ENCODE measurements at regions of chr2 and their contacts with region 1.

Region 1: GRCh38 chr2:48107326-48107925 is 201.1 kb upstream of the FBXO11 start:
- DNase-seq: no peak
- H3K4me3 ChIP-seq: peak overlapping the region in 1 of 3 donors; percentile 48
- H3K27ac ChIP-seq: no peak overlapping the region
- H3K4me1 ChIP-seq: peaks cover 0 to 12% (median 7%) of the 10 kb centered on the region in 3 donors
- H3K27me3 ChIP-seq: no peaks in the 10 kb centered on the region
- CTCF ChIP-seq: no peak

Region 2: DNA sequence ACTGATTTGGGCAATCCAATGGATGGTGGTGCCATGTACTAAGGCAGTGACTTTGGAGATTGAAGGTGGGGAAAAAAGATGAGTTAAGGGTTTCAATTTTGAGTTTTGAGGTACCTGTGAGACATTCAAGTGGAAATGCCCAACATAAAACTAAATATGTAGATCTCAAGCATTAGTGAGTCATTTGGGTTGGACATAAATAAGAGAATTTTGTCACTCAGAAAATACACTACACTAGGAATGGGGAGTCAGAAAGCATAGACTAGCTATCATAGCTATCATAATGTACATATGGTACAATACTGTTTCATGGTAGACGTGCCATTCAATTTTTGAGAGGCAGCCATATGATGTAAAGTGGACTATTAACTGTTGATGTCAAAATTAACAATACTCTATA is 257.2 kb before region 1 on chr2:
- intact Hi-C with region 1: loop called (anchors 10 kb)
- DNase-seq: no peak
- H3K4me3 ChIP-seq: no peak overlapping the region
- H3K27ac ChIP-seq: no peak overlapping the region
- H3K4me1 ChIP-seq: peaks cover 0 to 4% (median 0%) of the 10 kb centered on the region in 3 donors
- H3K27me3 ChIP-seq: no peaks in the 10 kb centered on the region
- CTCF ChIP-seq: no peak

Region 3: DNA sequence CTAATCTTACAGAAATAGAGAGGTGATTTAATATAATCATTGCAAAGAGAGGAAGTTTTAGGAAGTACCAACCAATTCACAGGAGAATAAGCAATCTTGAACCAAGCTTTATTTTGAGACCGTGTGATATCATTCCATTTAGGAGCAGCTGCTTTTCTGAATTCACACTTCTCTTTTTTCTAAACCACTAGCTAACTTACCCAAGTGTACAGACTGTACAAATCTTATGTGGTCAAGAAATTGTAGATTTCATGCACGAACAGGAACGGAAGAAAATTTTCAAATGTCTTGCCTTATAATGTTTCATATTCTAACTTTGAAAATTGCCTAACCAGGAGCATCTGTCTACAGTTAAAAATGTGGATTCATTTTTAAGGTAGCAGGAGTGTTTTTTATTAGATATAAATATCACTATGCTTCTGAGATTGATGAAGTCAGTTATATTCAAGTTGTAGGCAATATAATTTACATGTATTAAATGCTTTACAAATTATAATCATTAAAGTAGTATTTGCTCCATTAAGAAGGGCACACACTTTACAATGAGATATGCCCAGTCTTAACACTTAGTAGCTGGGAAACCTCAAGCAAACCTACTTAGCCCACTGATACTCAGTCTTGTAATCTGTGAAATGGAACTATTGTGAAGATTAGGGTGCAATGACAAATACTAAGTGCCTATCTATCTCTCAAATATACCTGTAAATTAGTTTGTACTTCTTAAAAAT is 120.4 kb after region 1 on chr2:
- intact Hi-C with region 1: no loop called
- DNase-seq: no peak
- H3K4me3 ChIP-seq: no peak overlapping the region
- H3K27ac ChIP-seq: no peak overlapping the region
- H3K4me1 ChIP-seq: no peaks in the 10 kb centered on the region
- H3K27me3 ChIP-seq: no peaks in the 10 kb centered on the region
- CTCF ChIP-seq: no peak

Region 4: DNA sequence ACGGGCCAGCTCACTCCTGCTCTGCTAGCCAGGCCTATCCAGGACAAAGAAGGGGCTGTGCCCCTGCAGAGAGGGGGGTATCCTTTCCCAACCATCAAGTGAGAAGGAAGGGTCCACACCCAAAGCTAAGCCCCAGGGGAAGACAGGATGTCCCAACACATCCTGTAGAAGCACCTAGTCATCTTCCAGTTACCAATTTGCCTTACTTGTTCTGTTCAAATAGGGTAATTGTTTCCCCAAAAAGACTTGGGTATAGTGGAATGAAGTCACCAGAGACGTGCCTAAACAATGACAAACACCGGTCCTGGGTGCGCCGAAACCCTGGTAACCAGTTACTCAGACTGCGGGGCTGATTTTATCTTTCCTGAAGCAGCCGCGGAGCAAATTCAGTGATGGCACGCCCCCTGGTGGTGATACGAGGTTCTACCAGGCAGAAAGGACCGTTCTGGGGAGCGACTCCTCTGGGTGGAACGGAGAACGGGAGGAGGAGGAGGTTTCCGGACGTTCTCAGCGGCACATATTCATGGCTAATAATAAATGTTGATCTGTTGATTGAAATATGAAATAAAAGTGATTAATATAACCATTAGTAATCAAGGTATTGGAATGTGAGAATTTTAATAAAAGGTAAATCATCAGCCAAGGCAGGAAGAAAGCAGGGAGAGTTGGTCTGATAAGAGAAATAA is 313.2 kb after region 1 on chr2:
- intact Hi-C with region 1: loop called (anchors 10 kb)
- DNase-seq: peak; percentile 91 to 93 (median 92)
- H3K4me3 ChIP-seq: peak overlapping the region in 2 of 3 donors; percentile 30 to 47
- H3K27ac ChIP-seq: no peak overlapping the region
- H3K4me1 ChIP-seq: peaks cover 0 to 14% (median 0%) of the 10 kb centered on the region in 3 donors
- H3K27me3 ChIP-seq: no peaks in the 10 kb centered on the region
- CTCF ChIP-seq: peak; percentile 99